Heart left ventricle (tissue), 16 donors: ENCODE measurements at regions of chr19 and their contacts with region 1.

Region 1: DNA sequence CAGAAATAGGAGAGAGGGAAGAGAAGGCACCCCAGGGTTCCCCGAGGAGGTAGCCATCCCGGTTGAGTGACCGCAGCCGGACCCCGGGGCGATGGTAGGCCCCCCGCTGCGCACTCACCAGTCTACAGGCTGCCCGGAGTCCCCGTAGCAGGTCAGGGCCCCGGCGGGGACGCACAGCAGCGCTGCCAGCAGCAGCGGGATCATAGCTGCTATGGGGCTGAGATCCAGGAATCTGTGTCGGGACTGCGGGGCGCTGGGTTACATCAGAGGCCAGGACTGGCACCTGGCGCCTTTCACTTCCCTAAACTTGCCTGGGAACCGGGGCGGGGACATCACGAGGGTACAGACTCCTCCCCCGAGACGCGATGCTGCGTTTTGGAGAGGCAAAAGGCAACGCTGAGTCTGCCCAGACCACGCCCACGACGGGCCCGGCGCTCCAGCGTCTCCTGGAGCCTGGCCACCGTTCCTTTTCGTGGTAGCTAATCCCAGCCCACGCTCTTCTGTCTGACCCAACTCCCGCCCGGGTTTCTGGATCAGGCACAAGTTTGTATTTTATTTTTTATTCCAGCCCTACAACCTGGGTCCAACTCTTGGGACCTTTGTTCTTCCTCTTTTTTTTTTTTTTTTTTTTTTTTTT is at the start of gene DNASE2:
- DNase-seq: peak; percentile 95 to 98 (median 96)
- ATAC-seq: peak; percentile 93 to 97 (median 94)
- H3K4me3 ChIP-seq: peak within 1 kb of the TSS; percentile 43 to 89 (median 72)
- H3K27ac ChIP-seq: peak within 1 kb of the TSS; percentile 72 to 93 (median 85)
- H3K4me1 ChIP-seq: peaks cover 0 to 56% (median 18%) of the 10 kb centered on the region in 12 donors
- H3K27me3 ChIP-seq: peaks cover 10 to 34% (median 23%) of the 10 kb centered on the region in 9 donors
- CTCF ChIP-seq: no peak
- POLR2A ChIP-seq: peak in 1 of 2 donors; percentile 79
- total RNA-seq, gene DNASE2: 15.9 to 41.1 (median 23.3) TPM

Region 2: DNA sequence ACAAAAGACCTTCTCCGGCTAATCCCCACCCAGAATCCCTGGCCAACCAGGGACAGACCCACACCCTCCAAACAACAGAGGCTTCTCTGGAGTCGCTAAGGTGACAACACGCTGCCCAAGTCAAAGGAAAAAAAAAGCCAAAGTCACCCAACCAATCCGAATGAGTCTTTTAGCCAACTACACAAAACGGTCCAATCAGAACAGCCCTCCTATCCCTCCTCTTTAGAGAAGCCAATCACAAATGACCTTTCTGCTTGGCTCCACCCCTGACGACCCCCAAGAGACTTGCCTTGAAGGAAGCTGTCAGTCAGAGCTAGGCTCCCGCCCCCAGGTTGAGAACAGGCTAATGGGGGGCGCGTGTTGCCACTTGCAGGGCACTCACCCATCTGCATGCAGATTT is 178.2 kb before region 1 on chr19:
- intact Hi-C with region 1: no loop called
- DNase-seq: no peak
- ATAC-seq: no peak
- H3K4me3 ChIP-seq: no peak overlapping the region
- H3K27ac ChIP-seq: no peak overlapping the region
- H3K4me1 ChIP-seq: no peaks in the 10 kb centered on the region
- H3K27me3 ChIP-seq: no peaks in the 10 kb centered on the region
- CTCF ChIP-seq: no peak
- POLR2A ChIP-seq: no peak

Region 3: GRCh38 chr19:12913011-12913561 is 31.8 kb after region 1 on chr19:
- intact Hi-C with region 1: loop called in 1 of 10 experiments (anchors 2 kb)
- DNase-seq: peak; percentile 73 to 85 (median 79)
- ATAC-seq: peak; percentile 77 to 92 (median 85)
- H3K4me3 ChIP-seq: peak overlapping the region in 9 of 12 donors; percentile 6 to 44 (median 24)
- H3K27ac ChIP-seq: peak overlapping the region; percentile 34 to 84 (median 65)
- H3K4me1 ChIP-seq: peaks cover 0 to 25% (median 19%) of the 10 kb centered on the region in 12 donors
- H3K27me3 ChIP-seq: no peaks in the 10 kb centered on the region
- CTCF ChIP-seq: no peak
- POLR2A ChIP-seq: no peak

Region 4: GRCh38 chr19:12938234-12939025 is 57.1 kb after region 1 on chr19 and contains the start of gene CALR:
- intact Hi-C with region 1: loop called in 1 of 10 experiments (anchors 10 kb)
- DNase-seq: peak; percentile 99 to 100 (median 100)
- ATAC-seq: peak; percentile 92 to 95 (median 95)
- H3K4me3 ChIP-seq: peak within 1 kb of the TSS; percentile 63 to 99 (median 95)
- H3K27ac ChIP-seq: peak within 1 kb of the TSS; percentile 75 to 96 (median 92)
- H3K4me1 ChIP-seq: peaks cover 6 to 61% (median 35%) of the 10 kb centered on the region in 12 donors
- H3K27me3 ChIP-seq: no peaks in the 10 kb centered on the region
- CTCF ChIP-seq: peak in 3 of 12 donors; percentile 16 to 24 (median 24)
- POLR2A ChIP-seq: peak; percentile 100
- total RNA-seq, gene CALR: 231 to 816 (median 380) TPM

Region 5: GRCh38 chr19:12952488-12953137 is 71.3 kb after region 1 on chr19:
- intact Hi-C with region 1: no loop called
- DNase-seq: peak in 1 of 5 donors; percentile 20
- ATAC-seq: peak in 1 of 4 donors; percentile 29
- H3K4me3 ChIP-seq: no peak overlapping the region
- H3K27ac ChIP-seq: peak overlapping the region in 11 of 12 donors; percentile 2 to 81 (median 51)
- H3K4me1 ChIP-seq: peaks cover 0 to 60% (median 43%) of the 10 kb centered on the region in 12 donors
- H3K27me3 ChIP-seq: no peaks in the 10 kb centered on the region
- CTCF ChIP-seq: no peak
- POLR2A ChIP-seq: no peak

Region 6: GRCh38 chr19:12965017-12965811 is 83.9 kb after region 1 on chr19:
- intact Hi-C with region 1: loop called in 6 of 10 experiments (anchors 2 to 10 kb)
- DNase-seq: peak; percentile 75 to 91 (median 84)
- ATAC-seq: peak; percentile 68 to 91 (median 88)
- H3K4me3 ChIP-seq: peak overlapping the region in 11 of 12 donors; percentile 30 to 66 (median 56)
- H3K27ac ChIP-seq: peak overlapping the region in 10 of 12 donors; percentile 6 to 73 (median 55)
- H3K4me1 ChIP-seq: peaks cover 0 to 14% (median 5%) of the 10 kb centered on the region in 12 donors
- H3K27me3 ChIP-seq: no peaks in the 10 kb centered on the region
- CTCF ChIP-seq: peak; percentile 76 to 96 (median 89)
- POLR2A ChIP-seq: peak in 1 of 2 donors; percentile 41

Region 7: GRCh38 chr19:13044231-13044836 is 163.0 kb after region 1 on chr19:
- intact Hi-C with region 1: no loop called
- DNase-seq: peak in 1 of 5 donors; percentile 28
- ATAC-seq: peak in 2 of 4 donors; percentile 13 to 38
- H3K4me3 ChIP-seq: no peak overlapping the region
- H3K27ac ChIP-seq: peak overlapping the region in 9 of 12 donors; percentile 14 to 61 (median 24)
- H3K4me1 ChIP-seq: peaks cover 12 to 90% (median 76%) of the 10 kb centered on the region in 12 donors
- H3K27me3 ChIP-seq: no peaks in the 10 kb centered on the region
- CTCF ChIP-seq: no peak
- POLR2A ChIP-seq: no peak